PC-9 (cell line): ENCODE measurements at regions of chr13 and their contacts with region 1.

Region 1: DNA sequence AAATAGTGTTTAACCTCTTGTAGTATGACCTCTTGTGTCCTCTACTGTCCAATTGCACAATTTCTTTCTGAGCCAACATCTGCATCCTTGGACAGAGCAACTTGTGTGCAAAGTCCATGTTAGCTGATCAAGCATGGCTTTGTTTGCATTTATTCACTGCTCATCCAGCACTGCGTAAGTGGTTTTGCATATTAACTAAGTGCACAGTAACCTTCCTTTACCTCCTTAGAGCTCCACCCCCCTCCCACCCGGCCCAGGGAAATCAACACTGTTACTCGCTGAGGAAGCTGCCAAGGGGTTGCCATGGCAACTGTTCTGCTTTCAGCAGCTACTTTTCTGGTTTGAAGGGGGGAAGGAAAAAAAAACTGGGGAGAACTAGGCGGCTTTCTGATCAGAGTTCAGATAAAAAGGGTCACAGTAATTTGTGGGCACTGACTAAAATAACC is 153.5 kb upstream of the KLF12 start:
- DNase-seq: peak in 1 of 2 experiments; percentile 14
- H3K4me3 ChIP-seq: no peak overlapping the region
- H3K27ac ChIP-seq: no peak overlapping the region
- H3K4me1 ChIP-seq: no peaks in the 10 kb centered on the region
- H3K27me3 ChIP-seq: no peaks in the 10 kb centered on the region
- CTCF ChIP-seq: no peak

Region 2: DNA sequence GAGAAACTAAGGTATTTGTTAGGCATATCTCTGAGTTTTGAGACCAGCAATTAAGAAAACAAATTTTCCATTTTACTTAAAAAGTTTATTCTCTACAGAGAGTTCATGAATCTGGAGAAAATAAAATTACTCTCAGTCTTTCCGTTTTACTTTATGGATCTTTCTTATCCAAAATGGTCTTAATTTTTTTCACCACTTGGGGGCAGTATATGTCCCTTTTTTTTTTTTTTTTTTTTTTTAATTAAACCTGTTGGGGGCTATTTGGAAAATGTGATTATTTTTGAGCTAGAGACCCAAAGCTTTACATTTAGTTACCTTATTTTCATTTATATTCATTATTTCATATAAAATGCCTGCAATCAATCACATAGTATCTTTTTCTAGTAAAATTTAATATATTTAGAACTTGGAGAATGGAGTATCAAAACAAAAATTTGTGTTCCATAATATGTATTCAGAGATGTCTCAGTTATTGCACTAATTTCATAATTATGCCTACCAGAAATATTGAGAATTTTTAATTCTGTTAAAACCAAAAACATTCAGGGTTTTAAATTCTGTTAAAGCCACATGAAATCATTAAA is 1478.7 kb before region 1 on chr13:
- CTCF ChIA-PET with region 1: interaction called, 13 read pairs
- POLR2A ChIA-PET with region 1: no interaction called
- intact Hi-C with region 1: no loop called
- DNase-seq: no peak
- H3K4me3 ChIP-seq: no peak overlapping the region
- H3K27ac ChIP-seq: peak overlapping the region; percentile 38
- H3K4me1 ChIP-seq: peaks cover 10% of the 10 kb centered on the region; the same call in 1 of the 2 replicates
- H3K27me3 ChIP-seq: no peaks in the 10 kb centered on the region
- CTCF ChIP-seq: peak; percentile 84

Region 3: GRCh38 chr13:73754727-73755292 is 532.9 kb before region 1 on chr13:
- CTCF ChIA-PET with region 1: interaction called, 10 read pairs
- POLR2A ChIA-PET with region 1: no interaction called
- intact Hi-C with region 1: loop called (anchors 1 kb)
- DNase-seq: peak; percentile 25 to 52
- H3K4me3 ChIP-seq: no peak overlapping the region
- H3K27ac ChIP-seq: no peak overlapping the region
- H3K4me1 ChIP-seq: no peaks in the 10 kb centered on the region
- H3K27me3 ChIP-seq: no peaks in the 10 kb centered on the region
- CTCF ChIP-seq: peak; percentile 83

Region 4: DNA sequence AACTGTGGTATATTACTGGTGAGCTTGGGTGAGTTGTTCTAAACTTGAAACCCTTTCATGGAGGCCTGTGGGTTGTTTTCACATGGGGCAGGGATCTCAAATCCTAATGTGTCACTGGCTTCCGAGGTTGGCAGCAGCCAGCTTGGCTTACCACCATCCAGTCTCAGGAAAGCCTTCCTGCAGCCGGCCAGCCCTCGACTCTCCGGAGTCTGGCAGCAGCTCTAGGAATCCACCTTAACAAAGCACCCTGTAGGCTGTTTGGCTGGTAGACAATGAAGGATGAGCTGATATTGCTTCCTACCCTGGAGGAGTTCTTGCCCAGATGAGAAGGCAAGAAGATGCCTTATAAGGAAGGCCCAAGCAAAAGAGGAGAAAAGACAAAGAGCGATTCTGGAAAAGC is 341.9 kb before region 1 on chr13:
- CTCF ChIA-PET with region 1: no interaction called
- POLR2A ChIA-PET with region 1: no interaction called
- intact Hi-C with region 1: loop called (anchors 2 kb)
- DNase-seq: no peak
- H3K4me3 ChIP-seq: no peak overlapping the region
- H3K27ac ChIP-seq: no peak overlapping the region
- H3K4me1 ChIP-seq: no peaks in the 10 kb centered on the region
- H3K27me3 ChIP-seq: no peaks in the 10 kb centered on the region
- CTCF ChIP-seq: no peak

Region 5: GRCh38 chr13:74133657-74134201 is 154.0 kb before region 1 on chr13:
- CTCF ChIA-PET with region 1: interaction called, 3 read pairs
- POLR2A ChIA-PET with region 1: interaction called, 4 read pairs
- intact Hi-C with region 1: loop called (anchors 1 kb)
- DNase-seq: peak in 1 of 2 experiments; percentile 61
- H3K4me3 ChIP-seq: peak overlapping the region; percentile 38; the same call in 1 of the 2 replicates
- H3K27ac ChIP-seq: no peak overlapping the region
- H3K4me1 ChIP-seq: 0 out of 2 replicates have a peak, but pooled peaks cover 7% of the 10 kb centered on the region
- H3K27me3 ChIP-seq: peaks cover 17% of the 10 kb centered on the region
- CTCF ChIP-seq: no peak

Region 6: DNA sequence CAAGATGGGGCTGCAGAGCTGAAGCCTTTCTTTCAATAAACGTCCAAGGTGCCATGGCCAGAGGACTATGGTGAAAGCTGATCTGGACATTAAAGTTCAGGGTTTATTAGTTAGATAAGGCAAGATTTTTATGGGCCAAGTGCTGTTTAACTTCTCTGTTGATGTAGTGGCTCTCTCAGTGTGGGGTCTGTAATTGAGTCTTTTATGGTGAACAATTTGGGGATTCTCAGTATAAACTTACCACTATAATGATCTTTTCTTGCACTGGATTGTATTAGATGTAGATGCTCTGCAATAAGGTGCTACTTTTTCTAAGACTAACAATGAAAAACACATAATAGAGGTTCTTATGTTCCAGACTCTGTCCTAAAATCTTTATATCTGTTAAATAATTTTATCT is 36.6 kb after region 1 on chr13:
- CTCF ChIA-PET with region 1: no interaction called
- POLR2A ChIA-PET with region 1: no interaction called
- intact Hi-C with region 1: no loop called
- DNase-seq: no peak
- H3K4me3 ChIP-seq: no peak overlapping the region
- H3K27ac ChIP-seq: no peak overlapping the region
- H3K4me1 ChIP-seq: no peaks in the 10 kb centered on the region
- H3K27me3 ChIP-seq: no peaks in the 10 kb centered on the region
- CTCF ChIP-seq: no peak

Region 7: DNA sequence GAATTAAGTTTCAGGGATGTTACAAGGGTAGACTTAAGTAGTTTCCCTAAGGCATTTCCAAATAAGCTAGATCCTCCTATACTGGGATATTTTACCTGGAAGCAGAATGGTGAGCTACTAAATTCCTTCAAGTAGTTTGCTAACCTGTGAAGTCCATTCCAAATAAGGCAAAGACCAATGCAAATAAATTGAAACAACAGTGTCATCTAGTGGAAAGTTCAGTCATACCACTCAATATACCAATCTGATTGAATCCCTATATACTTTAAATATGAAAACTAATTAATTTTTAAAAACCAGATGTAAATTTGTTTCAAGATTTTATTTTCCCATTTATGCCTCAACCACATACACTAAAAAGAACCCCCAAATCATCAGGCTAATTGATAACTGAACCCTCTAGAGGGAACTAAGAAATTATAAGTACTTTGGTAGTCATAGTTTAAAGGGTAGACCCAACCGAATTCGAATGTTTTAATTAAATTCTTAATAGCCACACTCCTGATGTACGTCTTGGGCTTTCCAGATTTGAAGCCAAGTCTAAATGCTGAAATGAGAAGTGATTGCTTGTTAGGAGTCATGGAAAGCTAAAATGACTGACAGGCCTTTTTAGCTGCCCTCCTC is 970.5 kb after region 1 on chr13:
- CTCF ChIA-PET with region 1: interaction called, 11 read pairs
- POLR2A ChIA-PET with region 1: no interaction called
- intact Hi-C with region 1: no loop called
- DNase-seq: peak in 1 of 2 experiments; percentile 44
- H3K4me3 ChIP-seq: no peak overlapping the region
- H3K27ac ChIP-seq: no peak overlapping the region
- H3K4me1 ChIP-seq: no peaks in the 10 kb centered on the region
- H3K27me3 ChIP-seq: no peaks in the 10 kb centered on the region
- CTCF ChIP-seq: peak; percentile 72